OCI-LY7 (cell line): ENCODE measurements at regions of chr19 and their contacts with region 1.

Region 1: GRCh38 chr19:52139252-52140031 is at the start of gene ZNF616:
- DNase-seq: peak; percentile 95
- H3K4me3 ChIP-seq: peak within 1 kb of the TSS; percentile 80
- H3K27ac ChIP-seq: peak within 1 kb of the TSS; percentile 72
- H3K4me1 ChIP-seq: peaks cover 15% of the 10 kb centered on the region
- CTCF ChIP-seq: peak; percentile 88
- total RNA-seq, gene ZNF616: 3.8 and 5.2 TPM in 2 replicates

Region 2: DNA sequence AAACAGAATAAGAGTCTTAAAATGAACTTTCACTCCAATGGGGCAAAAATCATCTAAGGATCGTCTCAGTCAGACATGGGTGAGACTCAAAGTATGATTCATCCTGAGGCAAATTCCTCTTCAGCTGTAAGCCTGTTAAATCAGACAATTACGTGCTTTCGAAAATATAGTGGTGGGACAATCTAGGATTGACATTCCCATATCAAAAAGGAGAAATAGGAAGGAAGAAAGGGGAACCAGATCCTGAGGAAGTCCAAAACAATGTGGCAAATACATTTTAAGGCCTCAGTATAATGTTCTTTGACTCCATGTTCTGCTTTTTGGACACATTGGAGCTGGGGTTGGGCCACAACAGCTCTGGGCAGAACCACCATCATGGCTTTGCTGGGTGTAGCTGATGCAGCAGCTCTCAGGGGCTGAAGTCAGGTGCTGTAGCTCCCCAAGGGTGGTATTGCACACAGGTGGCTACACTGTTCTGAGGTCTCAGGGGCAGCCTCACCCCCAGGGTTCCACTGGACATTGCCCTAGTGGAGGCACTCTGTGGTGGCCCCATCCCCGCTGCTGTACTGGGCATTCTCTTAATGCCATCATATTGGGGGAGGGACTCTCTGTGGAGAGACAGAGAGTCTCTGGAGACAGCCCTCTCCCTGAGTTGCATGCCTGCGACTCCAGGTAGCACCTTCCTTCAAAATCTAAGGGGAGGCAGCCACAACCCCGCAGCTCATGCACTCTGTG is 350.2 kb before region 1 on chr19:
- CTCF ChIA-PET with region 1: no interaction called
- POLR2A ChIA-PET with region 1: no interaction called
- intact Hi-C with region 1: no loop called
- DNase-seq: no peak
- H3K4me3 ChIP-seq: no peak overlapping the region
- H3K27ac ChIP-seq: no peak overlapping the region
- H3K4me1 ChIP-seq: no peaks in the 10 kb centered on the region
- CTCF ChIP-seq: no peak

Region 3: GRCh38 chr19:52189735-52190486 is 50.5 kb after region 1 on chr19 and contains the start of gene PPP2R1A:
- CTCF ChIA-PET with region 1: no interaction called
- POLR2A ChIA-PET with region 1: interaction called, 4 read pairs
- intact Hi-C with region 1: loop called (anchors 2 kb)
- DNase-seq: peak; percentile 100
- H3K4me3 ChIP-seq: peak within 1 kb of the TSS; percentile 98
- H3K27ac ChIP-seq: peak within 1 kb of the TSS; percentile 91
- H3K4me1 ChIP-seq: peaks cover 38% of the 10 kb centered on the region
- CTCF ChIP-seq: no peak
- total RNA-seq, gene PPP2R1A: 117 and 154 TPM in 2 replicates

Region 4: DNA sequence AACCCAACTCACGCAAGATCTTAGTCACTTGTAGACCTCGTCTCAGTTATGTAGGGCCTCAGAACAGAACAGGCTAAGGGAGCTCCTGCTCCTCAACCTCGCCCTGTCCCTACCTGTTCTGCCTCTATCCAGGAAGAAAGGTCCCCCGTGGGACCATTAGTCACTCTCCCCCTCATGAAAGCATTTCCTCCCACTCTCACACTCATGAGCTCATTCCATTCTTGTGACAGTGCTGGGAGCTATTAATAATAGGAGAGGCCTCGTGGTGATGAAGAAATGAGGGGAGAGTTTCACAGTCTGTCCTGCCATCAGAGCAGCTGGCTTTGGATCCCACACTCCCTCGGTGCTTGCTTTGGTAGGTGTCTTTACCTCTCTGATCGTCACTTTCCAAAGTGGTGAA is 60.6 kb after region 1 on chr19:
- CTCF ChIA-PET with region 1: no interaction called
- POLR2A ChIA-PET with region 1: no interaction called
- intact Hi-C with region 1: no loop called
- DNase-seq: no peak
- H3K4me3 ChIP-seq: no peak overlapping the region
- H3K27ac ChIP-seq: no peak overlapping the region
- H3K4me1 ChIP-seq: no peaks in the 10 kb centered on the region
- CTCF ChIP-seq: no peak

Region 5: GRCh38 chr19:52237771-52238400 is 98.4 kb after region 1 on chr19:
- CTCF ChIA-PET with region 1: no interaction called
- POLR2A ChIA-PET with region 1: interaction called, 3 read pairs
- intact Hi-C with region 1: loop called (anchors 1 kb)
- DNase-seq: peak; percentile 68
- H3K4me3 ChIP-seq: no peak overlapping the region
- H3K27ac ChIP-seq: no peak overlapping the region
- H3K4me1 ChIP-seq: no peaks in the 10 kb centered on the region
- CTCF ChIP-seq: peak; percentile 96